Caco-2 (cell line): ENCODE measurements at regions of chr11 and their contacts with region 1.

Region 1: GRCh38 chr11:8225589-8226036 is 38.1 kb downstream of the LMO1 start:
- DNase-seq: peak; percentile 69 to 74
- H3K4me3 ChIP-seq: no peak overlapping the region
- H3K4me3 Mint-ChIP-seq: no peak overlapping the region
- H3K27ac Mint-ChIP-seq: no peak overlapping the region
- H3K4me1 ChIP-seq: no peaks in the 10 kb centered on the region
- H3K4me1 Mint-ChIP-seq: no peaks in the 10 kb centered on the region
- H3K27me3 ChIP-seq: no peaks in the 10 kb centered on the region
- H3K27me3 Mint-ChIP-seq: peaks cover 8% of the 10 kb centered on the region
- CTCF ChIP-seq: peak; percentile 91 to 92

Region 2: DNA sequence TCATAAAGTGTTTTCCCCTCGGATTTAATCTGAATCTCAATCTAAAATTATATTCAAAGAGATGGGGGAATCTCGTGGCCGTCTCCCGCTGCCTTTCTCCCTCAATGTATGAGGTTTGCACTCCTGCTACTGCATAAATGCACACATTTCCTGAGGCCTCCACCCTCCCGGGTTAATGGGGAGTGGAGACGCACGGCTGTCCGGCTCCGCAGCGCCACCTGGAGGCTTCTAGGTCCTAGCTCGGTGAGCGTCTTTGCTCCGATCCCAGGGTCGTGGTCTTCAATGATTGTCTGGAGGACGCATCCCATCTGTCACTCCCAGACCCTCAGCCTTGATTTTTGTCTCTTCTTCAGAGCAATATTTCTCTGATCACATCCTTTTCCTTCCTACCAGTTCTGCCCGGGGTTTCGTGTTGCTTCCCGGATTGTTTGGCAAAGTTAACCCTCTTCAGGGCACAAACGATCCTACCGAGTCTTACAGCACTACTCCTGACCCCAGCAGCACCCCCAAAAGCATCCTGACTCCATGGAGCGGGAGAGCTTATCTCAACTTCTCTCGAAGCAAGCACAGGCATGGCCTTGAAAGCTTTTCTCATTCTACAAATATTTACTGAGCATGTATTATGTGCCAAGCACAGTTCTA is 38.3 kb after region 1 on chr11 and contains the start of gene LMO1:
- CTCF ChIA-PET with region 1: interaction called, 4 read pairs
- POLR2A ChIA-PET with region 1: no interaction called
- intact Hi-C with region 1: loop called (anchors 1 kb)
- DNase-seq: peak; percentile 61 to 76
- H3K4me3 ChIP-seq: no peak within 1 kb of the TSS
- H3K4me3 Mint-ChIP-seq: no peak within 1 kb of the TSS
- H3K27ac Mint-ChIP-seq: no peak within 1 kb of the TSS
- H3K4me1 ChIP-seq: no peaks in the 10 kb centered on the region
- H3K4me1 Mint-ChIP-seq: peaks cover 7% of the 10 kb centered on the region
- H3K27me3 ChIP-seq: peaks cover 4% of the 10 kb centered on the region
- H3K27me3 Mint-ChIP-seq: peaks cover 17% of the 10 kb centered on the region
- CTCF ChIP-seq: peak; percentile 75 to 89
- total RNA-seq, gene LMO1: not detected in 2 replicates

Region 3: DNA sequence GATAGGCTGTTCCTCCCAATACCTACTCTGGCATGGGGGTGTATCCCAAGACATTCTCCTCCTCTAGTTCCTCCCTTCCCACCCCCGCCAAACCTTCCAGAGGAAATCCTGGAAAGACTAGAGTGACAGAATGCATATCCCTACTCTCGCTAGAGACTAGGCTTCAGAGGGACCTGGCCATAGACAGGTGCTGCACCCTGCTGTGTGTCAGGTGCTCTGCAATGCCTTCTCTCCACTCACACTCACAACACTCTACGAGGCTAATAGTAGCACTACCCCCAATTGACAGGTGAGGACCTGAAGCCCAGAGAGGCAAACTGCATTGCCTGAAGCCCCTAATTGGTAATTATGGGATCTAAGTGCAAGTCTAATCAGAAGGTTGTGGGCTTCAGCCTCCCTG is 84.2 kb after region 1 on chr11:
- CTCF ChIA-PET with region 1: no interaction called
- POLR2A ChIA-PET with region 1: no interaction called
- intact Hi-C with region 1: loop called (anchors 2 kb)
- DNase-seq: peak in 1 of 2 experiments; percentile 35
- H3K4me3 ChIP-seq: no peak overlapping the region
- H3K4me3 Mint-ChIP-seq: no peak overlapping the region
- H3K27ac Mint-ChIP-seq: no peak overlapping the region
- H3K4me1 ChIP-seq: no peaks in the 10 kb centered on the region
- H3K4me1 Mint-ChIP-seq: no peaks in the 10 kb centered on the region
- H3K27me3 ChIP-seq: no peaks in the 10 kb centered on the region; the same call in 1 of the 2 replicates
- H3K27me3 Mint-ChIP-seq: peaks cover 4% of the 10 kb centered on the region
- CTCF ChIP-seq: peak; percentile 23 to 53